ENCODE measurements at regions of chr11 and their contacts with region 1.

Region 1: GRCh38 chr11:23991165-23991539 is 505.7 kb upstream of the LUZP2 start:
- DNase-seq: no peak
- ATAC-seq: no peak
- H3K4me3 ChIP-seq: no peak overlapping the region
- H3K27ac ChIP-seq: no peak overlapping the region
- H3K4me1 ChIP-seq: peaks cover 22% of the 10 kb centered on the region
- H3K27me3 ChIP-seq: no peaks in the 10 kb centered on the region
- CTCF ChIP-seq: no peak

Region 2: GRCh38 chr11:23836981-23837380 is 154.2 kb before region 1 on chr11:
- CTCF ChIA-PET with region 1: no interaction called
- POLR2A ChIA-PET with region 1: no interaction called
- intact Hi-C with region 1: no loop called
- DNase-seq: no peak
- ATAC-seq: no peak
- H3K4me3 ChIP-seq: no peak overlapping the region
- H3K27ac ChIP-seq: no peak overlapping the region
- H3K4me1 ChIP-seq: no peaks in the 10 kb centered on the region
- H3K27me3 ChIP-seq: no peaks in the 10 kb centered on the region
- CTCF ChIP-seq: no peak

Region 3: DNA sequence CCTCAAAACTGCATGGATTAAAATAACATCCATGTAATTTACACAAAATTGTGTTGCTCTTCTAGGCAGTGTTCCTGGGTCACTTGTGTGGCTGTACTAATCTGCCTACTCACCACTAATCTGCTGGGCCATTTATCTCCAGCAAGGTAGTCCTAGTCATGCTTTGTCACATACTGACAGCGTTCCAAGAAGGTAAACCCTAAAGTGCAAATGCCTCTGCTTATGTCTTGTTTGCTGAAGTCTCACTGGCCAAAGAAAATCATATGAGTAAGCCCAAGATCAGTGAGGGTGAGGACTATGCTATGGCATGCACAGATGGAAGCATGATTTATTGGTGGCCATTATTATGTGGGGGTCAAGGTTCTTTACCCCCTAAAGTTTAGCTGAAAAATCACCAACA is 124.5 kb before region 1 on chr11:
- CTCF ChIA-PET with region 1: no interaction called
- POLR2A ChIA-PET with region 1: no interaction called
- intact Hi-C with region 1: loop called (anchors 1 kb)
- DNase-seq: peak; percentile 93
- ATAC-seq: peak; percentile 91
- H3K4me3 ChIP-seq: peak overlapping the region; percentile 29; the same call in 1 of the 2 replicates
- H3K27ac ChIP-seq: peak overlapping the region; percentile 72
- H3K4me1 ChIP-seq: peaks cover 22% of the 10 kb centered on the region
- H3K27me3 ChIP-seq: no peaks in the 10 kb centered on the region
- CTCF ChIP-seq: no peak

Measured in PC-3 (cell line).